AG04450 (cell line): ENCODE measurements at regions of chr5 and their contacts with region 1.

Region 1: GRCh38 chr5:133423618-133424282 is 188.6 kb downstream of the FSTL4 start:
- DNase-seq: no peak
- H3K4me3 ChIP-seq: no peak overlapping the region
- H3K27ac ChIP-seq: no peak overlapping the region
- H3K27me3 ChIP-seq: peaks cover 5% of the 10 kb centered on the region
- CTCF ChIP-seq: peak; percentile 75

Region 2: GRCh38 chr5:133331941-133332340 is 91.8 kb before region 1 on chr5:
- CTCF ChIA-PET with region 1: no interaction called
- POLR2A ChIA-PET with region 1: no interaction called
- DNase-seq: no peak
- H3K4me3 ChIP-seq: no peak overlapping the region
- H3K27ac ChIP-seq: no peak overlapping the region
- H3K27me3 ChIP-seq: peaks cover 18% of the 10 kb centered on the region
- CTCF ChIP-seq: no peak

Region 3: GRCh38 chr5:133363807-133364587 is 59.8 kb before region 1 on chr5:
- CTCF ChIA-PET with region 1: interaction called, 13 read pairs
- POLR2A ChIA-PET with region 1: no interaction called
- DNase-seq: no peak
- H3K4me3 ChIP-seq: no peak overlapping the region
- H3K27ac ChIP-seq: no peak overlapping the region
- H3K27me3 ChIP-seq: peaks cover 29% of the 10 kb centered on the region
- CTCF ChIP-seq: no peak

Region 4: GRCh38 chr5:133618141-133618540 is 194.4 kb after region 1 on chr5:
- CTCF ChIA-PET with region 1: no interaction called
- POLR2A ChIA-PET with region 1: no interaction called
- DNase-seq: no peak
- H3K4me3 ChIP-seq: no peak overlapping the region
- H3K27ac ChIP-seq: no peak overlapping the region
- H3K27me3 ChIP-seq: peaks cover 8% of the 10 kb centered on the region
- CTCF ChIP-seq: no peak

Region 5: DNA sequence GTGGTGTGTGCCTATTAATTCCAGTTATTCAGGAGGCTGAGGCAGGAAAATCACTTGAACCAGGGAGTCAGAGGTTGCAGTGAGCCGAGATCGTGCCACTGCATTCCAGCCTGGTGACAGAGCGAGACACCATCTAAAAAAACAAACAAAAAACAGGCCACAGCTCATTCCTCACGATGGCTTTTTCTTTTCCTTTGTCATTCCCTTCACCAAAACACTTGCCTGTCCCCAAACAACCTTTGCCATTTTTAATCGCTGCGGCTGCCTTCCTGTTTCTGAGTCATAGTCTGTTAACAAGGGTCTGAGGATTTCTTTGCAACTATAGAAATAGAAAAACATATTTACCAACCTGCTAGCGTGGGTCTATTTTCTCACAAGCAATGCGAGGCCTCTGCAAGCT is 311.6 kb after region 1 on chr5:
- CTCF ChIA-PET with region 1: no interaction called
- POLR2A ChIA-PET with region 1: no interaction called
- DNase-seq: no peak
- H3K4me3 ChIP-seq: no peak overlapping the region
- H3K27ac ChIP-seq: no peak overlapping the region
- H3K27me3 ChIP-seq: no peaks in the 10 kb centered on the region
- CTCF ChIP-seq: no peak

Region 6: DNA sequence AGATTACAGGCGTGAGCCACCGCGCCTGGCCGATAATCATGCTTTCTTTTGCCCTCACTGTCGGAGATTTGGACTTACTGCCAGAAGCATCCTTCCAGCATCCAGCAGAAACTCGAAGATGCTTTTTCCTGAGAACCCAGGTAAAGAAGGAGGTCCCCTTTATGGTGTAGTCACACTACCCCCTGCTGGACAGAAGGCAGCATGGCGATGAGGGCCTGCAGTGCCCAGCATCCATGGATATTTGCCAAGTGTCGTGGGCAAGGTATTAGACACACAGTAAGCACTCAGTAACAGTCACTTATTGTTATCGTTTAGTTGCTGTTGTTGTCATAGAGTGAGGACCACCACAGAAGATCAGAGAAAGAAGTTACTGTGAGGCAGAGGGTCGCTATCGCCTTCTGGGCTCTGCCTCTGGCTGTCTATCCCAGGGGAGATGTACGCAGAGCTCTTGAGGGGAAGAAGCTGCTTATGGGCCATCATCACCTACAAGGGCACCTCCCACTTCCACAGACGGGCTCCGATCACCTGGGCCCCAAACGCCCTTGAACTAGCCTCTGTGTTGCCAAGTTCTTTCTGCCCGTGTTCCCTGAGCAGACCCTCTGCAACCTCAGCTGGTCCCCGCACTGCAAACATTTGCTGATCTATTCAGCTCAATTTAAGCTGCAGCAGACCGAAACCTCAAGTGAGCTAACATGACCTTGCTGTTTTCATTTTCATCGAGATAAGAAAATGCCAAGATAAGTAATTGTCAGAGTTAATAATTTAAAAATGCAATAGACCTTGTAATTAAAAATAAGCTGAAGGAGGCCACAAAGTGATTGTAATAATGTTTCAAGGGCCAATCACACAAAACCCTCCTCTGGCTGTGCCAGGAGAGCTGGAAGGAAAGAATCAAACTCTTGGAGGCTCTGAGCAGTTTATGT is 520.8 kb after region 1 on chr5:
- CTCF ChIA-PET with region 1: interaction called, 10 read pairs
- POLR2A ChIA-PET with region 1: no interaction called
- DNase-seq: no peak
- H3K4me3 ChIP-seq: no peak overlapping the region
- H3K27ac ChIP-seq: no peak overlapping the region
- H3K27me3 ChIP-seq: peaks cover 6% of the 10 kb centered on the region
- CTCF ChIP-seq: peak; percentile 70

Region 7: GRCh38 chr5:134101686-134102439 is 678.1 kb after region 1 on chr5:
- CTCF ChIA-PET with region 1: no interaction called
- POLR2A ChIA-PET with region 1: no interaction called
- DNase-seq: no peak
- H3K4me3 ChIP-seq: no peak overlapping the region
- H3K27ac ChIP-seq: no peak overlapping the region
- H3K27me3 ChIP-seq: peaks cover 18% of the 10 kb centered on the region
- CTCF ChIP-seq: peak; percentile 87